ENCODE measurements at regions of chr2 and their contacts with region 1.

Region 1: GRCh38 chr2:43484323-43484930 is 111.4 kb downstream of the THADA start:
- DNase-seq: no peak
- ATAC-seq: peak; percentile 68 to 71
- H3K4me3 ChIP-seq: no peak overlapping the region
- H3K27ac ChIP-seq: no peak overlapping the region
- H3K4me1 ChIP-seq: no peaks in the 10 kb centered on the region
- H3K27me3 ChIP-seq: no peaks in the 10 kb centered on the region

Region 2: DNA sequence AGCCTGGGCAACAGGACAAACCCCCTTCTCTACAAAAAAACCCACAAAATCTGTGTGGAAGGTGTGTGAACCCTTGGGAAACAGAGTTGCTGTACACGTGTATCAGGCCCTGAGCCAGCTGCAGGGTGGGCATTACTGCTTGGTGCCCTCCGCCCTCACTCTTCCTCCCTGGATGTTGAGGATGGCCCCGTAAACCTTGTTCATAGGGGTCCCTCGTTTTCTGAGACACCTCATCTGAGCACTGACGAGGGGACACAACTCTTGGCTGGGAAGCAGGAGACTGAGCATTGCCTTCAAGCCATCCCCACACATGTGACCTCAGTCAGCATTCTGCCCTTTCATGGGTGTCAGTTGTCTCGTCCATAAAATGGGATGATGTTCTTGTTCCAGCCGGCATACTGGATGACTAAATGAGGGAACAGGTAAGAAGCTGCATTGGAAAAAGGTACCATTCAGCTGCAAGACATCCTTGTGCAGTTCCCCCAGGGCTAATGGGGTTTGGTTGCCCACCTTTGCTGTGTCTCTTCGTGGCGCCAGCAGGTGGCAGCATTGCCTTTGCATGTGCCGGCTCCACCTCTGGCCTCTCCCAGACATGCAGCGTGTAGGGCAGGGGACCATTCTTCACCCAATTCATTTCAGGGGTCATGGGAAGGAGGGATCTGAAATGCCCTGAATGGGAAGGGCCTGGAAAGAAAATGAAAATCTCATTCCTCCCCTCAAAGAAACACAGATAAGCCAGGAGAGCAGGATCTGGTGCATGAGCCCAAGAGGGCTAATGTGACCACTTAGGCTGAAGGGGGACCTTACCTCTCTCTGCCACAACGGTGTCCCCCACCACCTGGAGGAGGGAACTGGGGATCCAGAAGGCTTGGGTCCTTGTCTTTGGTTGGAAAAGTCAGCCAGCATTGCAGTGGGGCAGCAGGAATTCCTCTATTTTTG is 655.7 kb before region 1 on chr2:
- intact Hi-C with region 1: loop called (anchors 5 to 10 kb)
- DNase-seq: peak; percentile 79 to 91 (median 91)
- ATAC-seq: peak; percentile 90 to 93
- H3K4me3 ChIP-seq: no peak overlapping the region
- H3K27ac ChIP-seq: no peak overlapping the region
- H3K4me1 ChIP-seq: no peaks in the 10 kb centered on the region
- H3K27me3 ChIP-seq: no peaks in the 10 kb centered on the region

Region 3: GRCh38 chr2:42944779-42945415 is 539.5 kb before region 1 on chr2:
- intact Hi-C with region 1: loop called (anchors 10 kb)
- DNase-seq: peak in 1 of 3 donors; percentile 45
- ATAC-seq: no peak
- H3K4me3 ChIP-seq: no peak overlapping the region
- H3K27ac ChIP-seq: no peak overlapping the region
- H3K4me1 ChIP-seq: no peaks in the 10 kb centered on the region
- H3K27me3 ChIP-seq: no peaks in the 10 kb centered on the region

Region 4: GRCh38 chr2:42974721-42975717 is 509.4 kb before region 1 on chr2:
- intact Hi-C with region 1: loop called in 1 of 4 experiments (anchors 5 kb)
- DNase-seq: peak; percentile 81 to 94 (median 93)
- ATAC-seq: peak; percentile 87
- H3K4me3 ChIP-seq: peak overlapping the region; percentile 33
- H3K27ac ChIP-seq: no peak overlapping the region
- H3K4me1 ChIP-seq: no peaks in the 10 kb centered on the region
- H3K27me3 ChIP-seq: no peaks in the 10 kb centered on the region

Region 5: GRCh38 chr2:43239981-43240761 is 244.3 kb before region 1 on chr2:
- intact Hi-C with region 1: loop called in 2 of 4 experiments (anchors 10 kb)
- DNase-seq: no peak
- ATAC-seq: peak in 1 of 2 donors; percentile 15
- H3K4me3 ChIP-seq: no peak overlapping the region
- H3K27ac ChIP-seq: peak overlapping the region; percentile 28
- H3K4me1 ChIP-seq: peaks cover 2% of the 10 kb centered on the region
- H3K27me3 ChIP-seq: no peaks in the 10 kb centered on the region

Measured in right cardiac atrium (tissue), 5 donors.